ENCODE measurements at regions of chr11 and their contacts with region 1.

Region 1: DNA sequence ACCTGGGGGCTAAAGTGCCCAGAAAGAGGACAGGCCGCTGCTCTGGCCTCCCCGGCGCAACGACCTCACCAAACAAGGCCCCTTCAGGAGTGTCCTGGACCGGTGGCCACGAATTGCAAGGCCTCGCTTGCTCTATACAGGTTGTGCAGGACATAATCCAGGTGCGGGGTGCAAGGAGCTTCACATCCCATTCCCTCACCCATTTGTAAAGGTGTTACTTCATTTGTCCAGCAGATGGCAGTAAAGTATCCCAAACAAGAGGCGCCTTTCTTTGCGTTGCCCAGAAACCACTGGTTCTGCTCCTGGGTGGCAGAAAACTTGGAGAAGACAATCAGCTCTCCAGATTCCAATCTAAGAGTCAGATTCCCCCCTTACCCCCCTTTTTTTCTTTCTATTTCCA is 35.9 kb upstream of the PRDM11 start:
- DNase-seq: peak in 5 of 7 donors; percentile 45 to 69 (median 62)
- H3K4me3 ChIP-seq: no peak overlapping the region
- H3K27ac ChIP-seq: no peak overlapping the region
- H3K4me1 ChIP-seq: no peaks in the 10 kb centered on the region
- H3K27me3 ChIP-seq: peaks cover 11% of the 10 kb centered on the region
- CTCF ChIP-seq: peak; percentile 61 to 87 (median 78)
- POLR2A ChIP-seq: no peak

Region 2: DNA sequence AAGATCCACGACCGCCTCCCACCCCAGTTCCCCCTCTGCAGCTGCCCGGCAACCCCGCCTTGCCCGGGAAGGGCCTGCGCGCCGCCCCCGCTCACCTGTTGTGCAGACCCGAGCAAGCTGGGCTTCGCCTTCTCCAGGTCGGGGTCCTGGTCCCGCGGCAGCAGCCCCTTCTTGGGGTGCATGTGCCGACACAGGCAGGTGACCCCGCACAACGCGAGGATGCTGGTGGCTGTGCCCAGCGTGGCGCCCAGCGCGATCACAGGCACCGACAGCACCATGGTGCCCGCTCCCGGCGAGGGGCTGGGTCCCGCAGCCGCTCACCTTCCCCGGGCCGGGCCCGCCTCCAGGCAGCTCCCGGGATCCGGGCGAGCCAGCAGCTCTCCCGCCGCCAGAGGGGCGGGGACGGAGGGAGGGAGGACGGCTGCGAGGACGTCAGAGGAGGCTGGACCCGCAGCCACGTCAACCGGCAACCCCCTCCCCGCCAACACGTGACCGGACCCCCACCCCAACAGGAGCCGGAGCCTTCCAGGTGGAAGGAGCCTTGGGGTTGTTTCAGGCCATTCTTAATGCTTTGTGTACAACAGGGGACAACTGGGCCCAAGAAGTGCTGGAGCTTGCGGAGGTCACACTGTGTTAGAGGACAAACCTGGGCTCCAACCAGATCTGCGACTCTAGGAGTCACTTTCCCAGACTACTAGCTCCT is 175.5 kb after region 1 on chr11 and contains the start of gene SYT13:
- intact Hi-C with region 1: loop called in 1 of 2 experiments (anchors 10 kb)
- DNase-seq: peak in 2 of 7 donors; percentile 53 to 76
- H3K4me3 ChIP-seq: peak within 1 kb of the TSS in 1 of 4 donors; percentile 29
- H3K27ac ChIP-seq: peak within 1 kb of the TSS in 1 of 5 donors; percentile 68
- H3K4me1 ChIP-seq: peaks cover 0 to 4% of the 10 kb centered on the region in 2 donors
- H3K27me3 ChIP-seq: peaks cover 34% of the 10 kb centered on the region
- CTCF ChIP-seq: no peak
- POLR2A ChIP-seq: no peak
- total RNA-seq, gene SYT13: 0.50 to 6.6 (median 3.3) TPM in 5 of 9 donors, not detected in the others

Region 3: GRCh38 chr11:45298718-45299117 is 188.2 kb after region 1 on chr11:
- intact Hi-C with region 1: loop called in 1 of 2 experiments (anchors 2 kb)
- DNase-seq: no peak
- H3K4me3 ChIP-seq: no peak overlapping the region
- H3K27ac ChIP-seq: no peak overlapping the region
- H3K4me1 ChIP-seq: no peaks in the 10 kb centered on the region
- H3K27me3 ChIP-seq: no peaks in the 10 kb centered on the region
- CTCF ChIP-seq: no peak
- POLR2A ChIP-seq: no peak

Region 4: DNA sequence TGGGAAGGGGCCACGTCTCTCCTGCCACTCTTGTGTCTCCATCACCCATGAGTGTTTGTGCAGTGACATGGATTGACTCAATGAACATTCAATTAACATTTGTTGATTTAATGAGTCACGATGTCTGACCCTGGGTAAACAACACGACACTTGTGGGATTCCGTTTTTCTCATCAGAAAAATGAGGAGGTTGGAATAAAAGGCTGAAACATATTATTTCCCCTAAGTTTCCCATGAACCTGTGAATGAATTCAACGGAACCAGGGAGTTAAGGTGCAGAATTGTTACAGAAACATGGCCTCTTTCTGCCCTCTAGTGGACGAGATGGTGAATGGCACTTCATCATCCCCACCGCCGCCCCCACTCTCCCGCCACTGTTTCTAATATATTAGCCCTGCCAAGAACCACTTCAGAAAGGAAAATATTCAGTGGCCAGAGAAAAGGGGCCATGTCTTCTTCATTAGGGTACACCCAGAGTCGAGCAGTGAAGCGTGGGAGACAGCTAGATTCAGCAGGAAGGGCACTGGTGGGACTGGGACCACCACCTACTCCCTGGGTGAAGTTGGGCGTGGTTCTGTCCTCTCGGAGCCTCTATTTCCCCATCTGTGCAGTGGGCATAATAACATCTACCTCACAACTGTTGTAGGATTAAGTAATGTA is 221.8 kb after region 1 on chr11:
- intact Hi-C with region 1: loop called (anchors 2 kb)
- DNase-seq: peak in 5 of 7 donors; percentile 24 to 63 (median 44)
- H3K4me3 ChIP-seq: peak overlapping the region in 1 of 4 donors; percentile 21
- H3K27ac ChIP-seq: peak overlapping the region in 2 of 5 donors; percentile 56 to 57
- H3K4me1 ChIP-seq: no peaks in the 10 kb centered on the region
- H3K27me3 ChIP-seq: no peaks in the 10 kb centered on the region
- CTCF ChIP-seq: peak; percentile 34 to 86 (median 57)
- POLR2A ChIP-seq: no peak

Measured in adrenal gland (tissue), 19 donors.